ENCODE measurements at regions of chr2 and their contacts with region 1.

Region 1: DNA sequence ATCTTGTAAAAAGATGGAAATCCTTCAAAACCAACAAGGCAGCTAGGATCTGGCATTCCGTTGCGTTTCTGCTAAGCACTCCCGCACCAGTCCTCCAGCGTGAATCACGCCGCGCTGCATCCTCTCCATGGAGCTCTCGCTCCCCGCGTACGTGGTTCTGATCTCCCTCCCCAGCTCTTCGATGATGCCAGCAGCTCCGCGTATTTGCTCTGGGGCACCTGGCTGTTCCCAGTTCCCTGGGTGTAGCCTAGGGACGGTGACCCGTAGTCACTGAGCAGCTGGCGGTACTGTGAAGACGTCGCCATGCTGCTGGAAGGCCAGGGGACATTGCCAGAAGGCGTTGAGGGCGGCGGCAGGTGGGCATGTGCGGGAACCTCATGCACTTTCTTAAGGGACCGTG is 407.5 kb downstream of the RNF144A start:
- DNase-seq: no peak
- H3K4me3 ChIP-seq: no peak overlapping the region
- H3K27ac ChIP-seq: no peak overlapping the region
- H3K4me1 ChIP-seq: no peaks in the 10 kb centered on the region
- H3K27me3 ChIP-seq: no peaks in the 10 kb centered on the region
- CTCF ChIP-seq: no peak
- POLR2A ChIP-seq: no peak

Region 2: GRCh38 chr2:5842326-5842725 is 1482.4 kb before region 1 on chr2:
- intact Hi-C with region 1: loop called (anchors 5 kb)
- DNase-seq: no peak
- H3K4me3 ChIP-seq: no peak overlapping the region
- H3K27ac ChIP-seq: no peak overlapping the region
- H3K4me1 ChIP-seq: no peaks in the 10 kb centered on the region
- H3K27me3 ChIP-seq: peaks cover 0 to 8% of the 10 kb centered on the region in 2 donors
- CTCF ChIP-seq: no peak
- POLR2A ChIP-seq: no peak

Region 3: GRCh38 chr2:7309582-7309981 is 15.1 kb before region 1 on chr2:
- intact Hi-C with region 1: loop called (anchors 2 kb)
- DNase-seq: no peak
- H3K4me3 ChIP-seq: no peak overlapping the region
- H3K27ac ChIP-seq: no peak overlapping the region
- H3K4me1 ChIP-seq: no peaks in the 10 kb centered on the region
- H3K27me3 ChIP-seq: no peaks in the 10 kb centered on the region
- CTCF ChIP-seq: no peak
- POLR2A ChIP-seq: no peak

Measured in breast epithelium (tissue), 4 donors.